ENCODE measurements at regions of chr4 and their contacts with region 1.

Region 1: GRCh38 chr4:122500852-122501501 is 44.5 kb upstream of the IL2 start:
- DNase-seq: no peak
- H3K4me3 Mint-ChIP-seq: no peak overlapping the region
- H3K27ac Mint-ChIP-seq: no peak overlapping the region
- H3K4me1 Mint-ChIP-seq: peaks cover 37% of the 10 kb centered on the region
- H3K27me3 Mint-ChIP-seq: peaks cover 11% of the 10 kb centered on the region

Region 2: DNA sequence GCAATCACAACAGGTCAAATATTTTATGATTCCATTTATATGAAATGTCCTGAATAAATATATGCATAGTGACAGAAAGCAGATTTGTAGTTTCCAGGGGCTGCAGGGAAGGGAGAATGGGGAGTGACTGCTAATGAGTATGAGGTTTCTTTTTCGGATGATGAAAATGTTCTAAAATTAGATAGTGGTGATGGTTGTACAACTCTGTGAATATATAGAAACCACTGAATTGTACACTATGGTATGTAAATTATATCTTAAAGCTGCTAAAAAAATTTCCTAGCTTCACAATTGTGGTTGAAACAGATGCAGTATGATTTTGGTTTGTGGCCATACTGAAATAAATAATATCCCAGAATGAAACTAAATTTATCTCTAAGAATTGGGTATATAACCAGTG is 31.5 kb before region 1 on chr4:
- intact Hi-C with region 1: loop called (anchors 2 kb)
- DNase-seq: no peak
- H3K4me3 Mint-ChIP-seq: no peak overlapping the region
- H3K27ac Mint-ChIP-seq: no peak overlapping the region
- H3K4me1 Mint-ChIP-seq: no peaks in the 10 kb centered on the region
- H3K27me3 Mint-ChIP-seq: no peaks in the 10 kb centered on the region

Region 3: DNA sequence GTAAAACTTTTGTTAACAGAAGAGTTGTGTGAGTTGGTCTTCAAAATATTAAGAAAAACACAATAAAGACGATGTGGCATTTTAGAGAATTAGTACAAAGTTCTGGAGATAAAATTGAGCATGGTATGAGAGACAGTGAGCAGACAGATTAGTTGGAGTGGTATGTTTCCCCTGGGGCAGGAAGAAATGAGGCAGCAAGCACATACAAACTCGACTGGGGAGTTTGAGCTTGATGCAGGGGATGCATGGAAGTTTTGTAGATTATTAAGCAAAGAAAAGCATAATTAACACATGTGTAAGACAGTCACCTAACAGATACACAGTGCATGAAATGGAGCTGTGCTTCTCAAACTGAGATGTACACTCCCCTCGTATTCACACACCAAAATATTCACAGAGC is 13.7 kb after region 1 on chr4:
- intact Hi-C with region 1: no loop called
- DNase-seq: no peak
- H3K4me3 Mint-ChIP-seq: no peak overlapping the region
- H3K27ac Mint-ChIP-seq: peak overlapping the region; percentile 1
- H3K4me1 Mint-ChIP-seq: peaks cover 23% of the 10 kb centered on the region
- H3K27me3 Mint-ChIP-seq: peaks cover 23% of the 10 kb centered on the region

Region 4: GRCh38 chr4:122542411-122543236 is 41.6 kb after region 1 on chr4:
- intact Hi-C with region 1: loop called (anchors 1 kb)
- DNase-seq: no peak
- H3K4me3 Mint-ChIP-seq: peak overlapping the region; percentile 53
- H3K27ac Mint-ChIP-seq: peak overlapping the region; percentile 87
- H3K4me1 Mint-ChIP-seq: peaks cover 74% of the 10 kb centered on the region
- H3K27me3 Mint-ChIP-seq: peaks cover 1% of the 10 kb centered on the region

Measured in activated T-helper 2 cell treated with anti-CD3 and anti-CD28 coated beads, Interferon-gamma antibody, Interleukin-2, Interleukin-4, amounts not matched to agents 10 μg/mL and 5 μg/mL and 100 μg/mL, durations not matched to agents 14 hours and 24 hours and 36 hours (primary cell).